AG04450 (cell line): ENCODE measurements at regions of chr12 and their contacts with region 1.

Region 1: GRCh38 chr12:69359531-69360347 is at the start of gene YEATS4:
- DNase-seq: peak; percentile 67
- H3K4me3 ChIP-seq: peak within 1 kb of the TSS; percentile 85
- H3K27ac ChIP-seq: peak within 1 kb of the TSS; percentile 95
- H3K27me3 ChIP-seq: no peaks in the 10 kb centered on the region
- CTCF ChIP-seq: no peak
- polyA plus RNA-seq, gene YEATS4: 8.1 and 13.0 TPM in 2 replicates

Region 2: GRCh38 chr12:69157023-69157655 is 202.6 kb before region 1 on chr12:
- CTCF ChIA-PET with region 1: interaction called, 18 read pairs
- POLR2A ChIA-PET with region 1: no interaction called
- DNase-seq: peak; percentile 48
- H3K4me3 ChIP-seq: no peak overlapping the region
- H3K27ac ChIP-seq: no peak overlapping the region
- H3K27me3 ChIP-seq: no peaks in the 10 kb centered on the region
- CTCF ChIP-seq: peak; percentile 99

Region 3: GRCh38 chr12:69168828-69169227 is 190.9 kb before region 1 on chr12:
- CTCF ChIA-PET with region 1: no interaction called
- POLR2A ChIA-PET with region 1: no interaction called
- DNase-seq: no peak
- H3K4me3 ChIP-seq: no peak overlapping the region
- H3K27ac ChIP-seq: no peak overlapping the region
- H3K27me3 ChIP-seq: peaks cover 10% of the 10 kb centered on the region
- CTCF ChIP-seq: no peak

Region 4: DNA sequence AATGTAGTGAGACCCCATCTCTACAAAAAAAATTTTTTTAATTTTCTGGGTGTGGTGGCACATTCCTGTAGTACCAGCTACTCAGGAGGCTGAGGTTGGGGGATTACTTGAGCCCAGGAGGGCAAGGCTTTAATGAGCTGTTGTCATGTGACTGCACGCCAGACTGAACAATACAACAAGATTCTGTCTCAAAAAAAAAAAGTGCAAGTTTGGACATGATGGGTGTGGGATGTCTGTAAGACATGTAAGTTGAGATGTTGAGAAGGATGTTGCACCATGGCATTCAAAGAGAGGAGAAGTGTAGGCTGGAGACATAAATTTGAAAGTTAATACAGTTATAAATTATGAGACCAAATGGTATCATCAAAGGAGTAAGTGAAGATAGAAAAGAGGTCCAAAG is 23.3 kb after region 1 on chr12:
- CTCF ChIA-PET with region 1: interaction called, 14 read pairs
- POLR2A ChIA-PET with region 1: no interaction called
- DNase-seq: no peak
- H3K4me3 ChIP-seq: no peak overlapping the region
- H3K27ac ChIP-seq: no peak overlapping the region
- H3K27me3 ChIP-seq: no peaks in the 10 kb centered on the region
- CTCF ChIP-seq: no peak

Region 5: GRCh38 chr12:69397978-69398377 is 38.2 kb after region 1 on chr12:
- CTCF ChIA-PET with region 1: no interaction called
- POLR2A ChIA-PET with region 1: no interaction called
- DNase-seq: no peak
- H3K4me3 ChIP-seq: no peak overlapping the region
- H3K27ac ChIP-seq: no peak overlapping the region
- H3K27me3 ChIP-seq: no peaks in the 10 kb centered on the region
- CTCF ChIP-seq: no peak

Region 6: DNA sequence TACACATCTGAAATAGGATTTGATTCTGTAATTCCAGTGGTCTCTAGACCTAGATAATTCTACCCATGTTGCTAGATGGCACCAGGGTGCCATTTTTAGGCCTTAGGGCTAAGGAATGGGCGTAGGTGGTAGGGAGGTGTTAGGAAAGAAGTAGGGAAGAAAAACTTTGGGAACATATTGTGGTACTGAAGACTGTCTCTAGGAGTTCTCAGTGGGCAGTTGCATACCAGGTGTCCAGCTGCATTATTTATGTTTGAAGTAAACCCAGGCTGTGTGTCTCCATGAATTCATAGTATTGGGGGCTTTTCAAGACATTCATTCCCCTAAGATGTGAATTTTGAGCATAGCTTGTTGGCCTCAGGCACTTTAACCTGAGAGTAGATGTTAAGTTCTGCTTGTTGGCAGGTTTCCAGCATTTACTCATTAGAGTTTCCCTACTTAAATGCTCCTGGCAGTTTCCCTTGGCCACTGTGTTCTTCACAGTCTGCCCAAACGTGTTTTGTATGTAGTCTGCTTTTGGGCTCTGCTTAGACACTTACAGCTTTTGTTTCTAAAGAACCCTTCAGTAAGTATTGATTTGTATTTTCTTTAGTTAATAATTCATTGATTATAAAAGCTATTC is 194.0 kb after region 1 on chr12:
- CTCF ChIA-PET with region 1: interaction called, 15 read pairs
- POLR2A ChIA-PET with region 1: interaction called, 3 read pairs
- DNase-seq: no peak
- H3K4me3 ChIP-seq: no peak overlapping the region
- H3K27ac ChIP-seq: no peak overlapping the region
- H3K27me3 ChIP-seq: no peaks in the 10 kb centered on the region
- CTCF ChIP-seq: no peak

Region 7: GRCh38 chr12:69648481-69648880 is 288.7 kb after region 1 on chr12:
- CTCF ChIA-PET with region 1: interaction called, 15 read pairs
- POLR2A ChIA-PET with region 1: no interaction called
- DNase-seq: peak; percentile 80
- H3K4me3 ChIP-seq: no peak overlapping the region
- H3K27ac ChIP-seq: no peak overlapping the region
- H3K27me3 ChIP-seq: no peaks in the 10 kb centered on the region
- CTCF ChIP-seq: no peak

Region 8: DNA sequence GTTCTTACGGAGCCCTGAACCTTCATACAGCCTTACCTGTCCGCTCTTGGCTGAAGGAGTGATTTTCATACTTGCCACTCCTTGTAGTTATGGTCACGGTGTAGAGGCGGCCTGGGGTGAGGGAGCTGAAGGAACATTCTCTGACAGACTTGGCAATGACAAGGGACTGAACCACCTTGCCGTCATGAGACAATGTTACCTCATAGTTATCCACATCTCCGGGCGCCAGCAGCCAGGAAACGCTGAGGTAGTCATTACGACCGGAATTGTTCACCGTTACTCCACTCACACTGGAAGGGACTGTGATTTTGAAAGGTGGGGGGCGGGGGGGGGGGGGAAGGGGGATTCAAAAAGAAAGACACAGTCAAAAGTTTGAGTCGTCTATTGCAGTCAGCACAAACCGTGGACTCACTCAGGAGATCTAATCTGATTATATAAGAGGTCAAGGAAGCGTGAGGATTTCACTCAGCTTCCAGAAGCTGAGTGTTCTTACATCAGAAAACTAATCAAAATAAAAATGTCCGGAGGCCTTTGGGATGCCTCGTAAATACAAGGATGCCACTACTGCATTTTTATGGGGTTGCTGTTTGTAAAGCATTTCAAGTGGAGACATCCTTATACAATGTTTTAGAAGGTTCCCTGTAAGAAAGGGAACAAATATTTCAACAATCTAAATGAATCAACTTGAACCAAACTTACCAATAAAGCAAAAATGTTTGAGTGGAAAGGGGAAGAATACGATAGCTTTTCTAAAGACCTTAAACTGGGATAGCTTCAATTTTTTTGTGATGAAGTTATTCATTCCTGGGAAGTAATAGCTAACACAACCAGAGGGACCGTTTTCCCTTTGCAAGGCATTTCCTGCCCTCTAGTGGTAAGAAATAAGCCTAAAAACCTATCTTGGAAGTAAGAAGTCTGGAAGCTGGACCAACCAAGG is 1216.9 kb after region 1 on chr12:
- CTCF ChIA-PET with region 1: interaction called, 12 read pairs
- POLR2A ChIA-PET with region 1: no interaction called
- DNase-seq: peak; percentile 50
- H3K4me3 ChIP-seq: no peak overlapping the region
- H3K27ac ChIP-seq: no peak overlapping the region
- H3K27me3 ChIP-seq: no peaks in the 10 kb centered on the region
- CTCF ChIP-seq: peak; percentile 83